Gastrocnemius medialis (tissue), 4 donors: ENCODE measurements at regions of chr20 and their contacts with region 1.

Region 1: GRCh38 chr20:571754-572441 is 28.3 kb upstream of the CSNK2A1 start:
- DNase-seq: peak; percentile 19 to 45
- ATAC-seq: peak; percentile 62 to 63
- H3K4me3 ChIP-seq: peak overlapping the region in 2 of 4 donors; percentile 7 to 31
- H3K27ac ChIP-seq: peak overlapping the region; percentile 57 to 75 (median 69)
- H3K4me1 ChIP-seq: peaks cover 11 to 22% of the 10 kb centered on the region in 2 donors
- H3K27me3 ChIP-seq: peaks cover 4 to 12% (median 6%) of the 10 kb centered on the region in 3 donors
- CTCF ChIP-seq: no peak
- POLR2A ChIP-seq: no peak

Region 2: GRCh38 chr20:610130-611046 is 38.5 kb after region 1 on chr20 and contains the start of gene TCF15:
- in situ Hi-C with region 1: loop called in 1 of 4 experiments (anchors 5 kb)
- intact Hi-C with region 1: loop called (anchors 5 kb)
- DNase-seq: peak in 1 of 2 donors; percentile 19
- ATAC-seq: peak; percentile 69 to 73
- H3K4me3 ChIP-seq: peak within 1 kb of the TSS; percentile 38 to 59 (median 49)
- H3K27ac ChIP-seq: peak within 1 kb of the TSS; percentile 69 to 83 (median 80)
- H3K4me1 ChIP-seq: peaks cover 0 to 5% of the 10 kb centered on the region in 2 donors
- H3K27me3 ChIP-seq: peaks cover 20 to 26% (median 22%) of the 10 kb centered on the region in 3 donors
- CTCF ChIP-seq: no peak
- POLR2A ChIP-seq: peak; percentile 61 to 76
- total RNA-seq, gene TCF15: 3.6 to 10.7 (median 4.1) TPM

Region 3: DNA sequence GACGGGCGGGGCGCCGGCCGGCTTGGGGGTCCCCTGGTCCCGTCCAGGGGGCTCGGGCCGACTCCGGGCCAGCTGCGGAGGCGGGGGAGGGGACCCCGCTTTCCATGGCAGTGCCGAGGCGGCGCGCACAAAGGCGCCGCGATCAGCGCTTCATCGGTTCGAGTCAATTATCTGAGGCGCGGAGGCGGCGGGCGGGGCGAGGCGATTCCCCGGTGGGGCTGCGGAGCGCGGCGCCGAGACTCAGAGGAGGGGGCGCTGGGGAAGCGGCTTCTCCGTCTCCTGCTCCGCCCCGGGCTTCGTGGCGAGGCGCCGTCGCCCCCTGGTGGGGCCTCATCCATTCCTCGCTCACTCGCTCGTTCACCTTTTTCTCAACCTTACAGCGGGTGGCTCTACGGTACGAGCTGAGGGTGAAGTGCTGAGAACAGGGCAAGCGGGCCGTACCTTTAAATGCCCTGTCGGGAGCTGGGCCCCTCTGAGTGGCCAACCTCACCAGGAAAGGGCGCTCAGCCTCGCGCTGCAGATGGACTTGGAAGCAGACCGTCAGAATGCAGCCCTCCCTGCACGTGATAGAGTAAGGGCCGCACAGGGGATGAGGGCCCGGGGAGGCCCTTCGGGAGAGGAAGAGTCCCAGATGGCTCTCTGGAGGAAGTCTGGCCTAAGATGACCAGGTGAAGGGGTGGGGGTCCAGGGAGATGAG is 156.5 kb after region 1 on chr20:
- in situ Hi-C with region 1: no loop called
- intact Hi-C with region 1: no loop called
- DNase-seq: peak; percentile 5 to 20
- ATAC-seq: peak; percentile 71
- H3K4me3 ChIP-seq: peak overlapping the region; percentile 40 to 65 (median 50)
- H3K27ac ChIP-seq: no peak overlapping the region
- H3K4me1 ChIP-seq: peaks cover 5 to 8% of the 10 kb centered on the region in 2 donors
- H3K27me3 ChIP-seq: peaks cover 20 to 43% (median 27%) of the 10 kb centered on the region in 3 donors
- CTCF ChIP-seq: peak; percentile 12 to 68 (median 47)
- POLR2A ChIP-seq: no peak